GM12878 (cell line): ENCODE measurements at regions of chr6 and their contacts with region 1.

Region 1: DNA sequence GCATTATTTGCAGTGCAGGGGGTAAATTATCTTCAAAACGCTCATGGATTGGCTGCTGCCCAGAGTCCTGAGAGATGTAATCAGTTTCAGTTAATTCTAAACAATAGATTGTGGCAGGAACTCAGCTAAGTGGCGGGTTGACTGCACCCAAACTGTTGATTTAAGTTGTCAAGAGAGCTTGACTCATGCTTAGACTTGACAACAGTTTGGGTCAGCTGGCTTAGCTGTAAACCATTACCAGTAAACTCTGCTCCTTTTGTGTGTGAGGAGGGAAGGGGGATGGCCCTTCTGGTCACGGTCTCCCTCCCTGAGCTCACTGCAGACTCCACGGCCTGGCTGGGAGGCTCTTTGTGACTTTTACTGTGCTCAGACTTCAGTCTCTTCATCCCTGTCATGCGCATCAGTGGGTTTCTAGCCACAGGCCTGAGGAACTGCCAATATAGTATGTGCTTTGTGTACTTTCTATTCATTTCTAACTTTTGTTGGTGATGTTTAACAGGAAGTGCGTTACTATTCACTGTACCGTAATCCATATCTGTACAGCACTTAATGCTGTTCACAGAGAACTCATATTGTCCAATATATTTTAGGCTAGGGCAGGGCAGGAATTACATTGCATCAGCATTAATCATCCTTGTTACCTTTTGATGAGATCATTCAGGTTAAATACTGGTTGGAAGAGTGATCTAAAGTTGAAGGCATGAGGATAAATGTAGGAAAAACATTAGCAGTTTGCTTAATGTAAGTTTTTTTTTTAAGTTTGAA is 488.3 kb downstream of the CDKAL1 start:
- DNase-seq: peak; percentile 90
- ATAC-seq: peak; percentile 97
- H3K4me3 ChIP-seq: no peak overlapping the region; the same call in 1 of the 2 replicates
- H3K27ac ChIP-seq: peak overlapping the region; percentile 83
- H3K4me1 ChIP-seq: peaks cover 3% of the 10 kb centered on the region; the same call in 1 of the 2 replicates
- H3K27me3 ChIP-seq: no peaks in the 10 kb centered on the region
- CTCF ChIP-seq: no peak
- EP300 ChIP-seq: peak; percentile 87 to 89
- POLR2A ChIP-seq: peak; percentile 49
- RAD21 ChIP-seq: no peak; the same call in 1 of the 2 replicates

Region 2: GRCh38 chr6:20978151-20978614 is 44.3 kb before region 1 on chr6:
- CTCF ChIA-PET with region 1: no interaction called
- POLR2A ChIA-PET with region 1: interaction called, 4 read pairs
- RAD21 ChIA-PET with region 1: interaction called, 10 read pairs
- SMC1A ChIA-PET with region 1: interaction called, 15 read pairs
- in situ Hi-C with region 1: no loop called
- intact Hi-C with region 1: no loop called
- DNase-seq: peak; percentile 25
- ATAC-seq: peak; percentile 96
- H3K4me3 ChIP-seq: no peak overlapping the region
- H3K27ac ChIP-seq: no peak overlapping the region
- H3K4me1 ChIP-seq: peaks cover 11% of the 10 kb centered on the region; the same call in 1 of the 2 replicates
- H3K27me3 ChIP-seq: no peaks in the 10 kb centered on the region
- CTCF ChIP-seq: no peak
- EP300 ChIP-seq: peak; percentile 28 to 38; a peak in 2 of 4 replicates
- POLR2A ChIP-seq: no peak
- RAD21 ChIP-seq: peak; percentile 9; the same call in 1 of the 2 replicates

Region 3: GRCh38 chr6:21003780-21004541 is 18.6 kb before region 1 on chr6:
- CTCF ChIA-PET with region 1: interaction called, 9 read pairs
- POLR2A ChIA-PET with region 1: interaction called, 4 read pairs
- RAD21 ChIA-PET with region 1: interaction called, 40 read pairs
- SMC1A ChIA-PET with region 1: interaction called, 63 read pairs
- in situ Hi-C with region 1: no loop called
- intact Hi-C with region 1: loop called (anchors 1 kb)
- DNase-seq: peak; percentile 72
- ATAC-seq: peak; percentile 89
- H3K4me3 ChIP-seq: peak overlapping the region; percentile 32; the same call in 1 of the 2 replicates
- H3K27ac ChIP-seq: peak overlapping the region; percentile 83
- H3K4me1 ChIP-seq: peaks cover 20% of the 10 kb centered on the region
- H3K27me3 ChIP-seq: no peaks in the 10 kb centered on the region
- CTCF ChIP-seq: no peak
- EP300 ChIP-seq: peak in 1 of 2 experiments; percentile 72; a peak in 3 of 4 replicates
- POLR2A ChIP-seq: no peak
- RAD21 ChIP-seq: no peak

Region 4: GRCh38 chr6:21157186-21157929 is 134.8 kb after region 1 on chr6:
- CTCF ChIA-PET with region 1: interaction called, 3 read pairs
- POLR2A ChIA-PET with region 1: interaction called, 5 read pairs
- RAD21 ChIA-PET with region 1: interaction called, 10 read pairs
- SMC1A ChIA-PET with region 1: interaction called, 11 read pairs
- in situ Hi-C with region 1: no loop called
- intact Hi-C with region 1: loop called (anchors 2 kb)
- DNase-seq: peak; percentile 53
- ATAC-seq: peak; percentile 86
- H3K4me3 ChIP-seq: no peak overlapping the region
- H3K27ac ChIP-seq: peak overlapping the region; percentile 54; the same call in 1 of the 2 replicates
- H3K4me1 ChIP-seq: peaks cover 13% of the 10 kb centered on the region; the same call in 1 of the 2 replicates
- H3K27me3 ChIP-seq: no peaks in the 10 kb centered on the region
- CTCF ChIP-seq: no peak
- EP300 ChIP-seq: peak; percentile 72 to 84; a peak in 3 of 4 replicates
- POLR2A ChIP-seq: no peak
- RAD21 ChIP-seq: no peak

Region 5: GRCh38 chr6:21263531-21264287 is 241.2 kb after region 1 on chr6:
- CTCF ChIA-PET with region 1: interaction called, 3 read pairs
- POLR2A ChIA-PET with region 1: no interaction called
- RAD21 ChIA-PET with region 1: interaction called, 5 read pairs
- SMC1A ChIA-PET with region 1: interaction called, 5 read pairs
- in situ Hi-C with region 1: no loop called
- intact Hi-C with region 1: loop called (anchors 5 kb)
- DNase-seq: peak; percentile 63
- ATAC-seq: peak; percentile 94
- H3K4me3 ChIP-seq: no peak overlapping the region
- H3K27ac ChIP-seq: peak overlapping the region; percentile 69
- H3K4me1 ChIP-seq: peaks cover 17% of the 10 kb centered on the region
- H3K27me3 ChIP-seq: no peaks in the 10 kb centered on the region
- CTCF ChIP-seq: no peak
- EP300 ChIP-seq: peak; percentile 64 to 92; a peak in 3 of 4 replicates
- POLR2A ChIP-seq: no peak
- RAD21 ChIP-seq: 0 out of 2 replicates have a peak, but pooled peaks have one; percentile 7